ENCODE measurements at regions of chr7 and their contacts with region 1.

Region 1: DNA sequence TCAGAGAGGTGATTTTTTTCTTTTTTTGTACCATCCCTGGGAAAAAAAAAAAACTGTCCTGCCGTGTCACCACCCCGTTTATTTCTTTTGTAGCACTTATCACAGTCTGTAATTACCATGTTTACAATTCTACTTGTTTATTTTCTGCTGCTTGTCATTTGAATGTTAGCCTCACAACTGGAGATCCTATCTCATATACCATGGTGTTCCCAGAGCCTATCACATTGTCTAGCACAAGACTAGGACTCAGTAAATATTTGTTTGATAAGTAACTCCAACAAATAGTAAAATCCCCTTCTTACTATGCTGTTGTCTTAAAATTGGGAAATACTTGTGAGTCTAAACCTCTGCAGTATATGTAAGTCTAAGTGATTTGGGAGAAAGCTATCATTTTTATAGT is 36.0 kb downstream of the MKLN1 start:
- DNase-seq: no peak
- ATAC-seq: no peak
- H3K4me3 ChIP-seq: no peak overlapping the region
- H3K4me3 Mint-ChIP-seq: no peak overlapping the region
- H3K27ac ChIP-seq: no peak overlapping the region
- H3K27ac Mint-ChIP-seq: no peak overlapping the region
- H3K4me1 ChIP-seq: peaks cover 0 to 29% of the 10 kb centered on the region in 2 donors
- H3K4me1 Mint-ChIP-seq: peaks cover 70% of the 10 kb centered on the region
- H3K27me3 ChIP-seq: no peaks in the 10 kb centered on the region
- H3K27me3 Mint-ChIP-seq: no peaks in the 10 kb centered on the region
- CTCF ChIP-seq: no peak

Region 2: DNA sequence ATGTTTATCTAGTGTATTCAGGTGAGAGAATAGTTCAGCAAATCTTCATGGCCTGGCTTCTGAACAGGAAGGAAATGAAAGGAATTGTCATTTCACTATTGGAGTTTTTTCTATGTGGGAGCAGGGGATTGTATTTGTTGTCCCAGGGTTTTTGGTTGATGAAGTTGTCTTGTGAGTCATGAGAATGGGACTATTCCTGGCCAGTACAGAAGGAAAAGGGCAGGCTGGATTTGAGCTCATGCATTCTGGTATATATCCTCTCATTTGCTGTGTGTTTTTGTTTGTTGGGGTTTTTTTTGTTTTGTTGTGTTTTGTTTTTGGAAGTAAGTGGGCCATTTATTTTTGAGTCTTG is 137.2 kb before region 1 on chr7:
- CTCF ChIA-PET with region 1: no interaction called
- POLR2A ChIA-PET with region 1: no interaction called
- intact Hi-C with region 1: no loop called
- DNase-seq: no peak
- ATAC-seq: no peak
- H3K4me3 ChIP-seq: no peak overlapping the region
- H3K4me3 Mint-ChIP-seq: no peak overlapping the region
- H3K27ac ChIP-seq: no peak overlapping the region
- H3K27ac Mint-ChIP-seq: peak overlapping the region; percentile 37
- H3K4me1 ChIP-seq: peaks cover 6 to 10% of the 10 kb centered on the region in 2 donors
- H3K4me1 Mint-ChIP-seq: peaks cover 21% of the 10 kb centered on the region
- H3K27me3 ChIP-seq: no peaks in the 10 kb centered on the region
- H3K27me3 Mint-ChIP-seq: no peaks in the 10 kb centered on the region
- CTCF ChIP-seq: no peak

Region 3: GRCh38 chr7:131346885-131347592 is 16.7 kb before region 1 on chr7:
- CTCF ChIA-PET with region 1: no interaction called
- POLR2A ChIA-PET with region 1: no interaction called
- intact Hi-C with region 1: loop called (anchors 2 kb)
- DNase-seq: no peak
- ATAC-seq: no peak
- H3K4me3 ChIP-seq: no peak overlapping the region
- H3K4me3 Mint-ChIP-seq: no peak overlapping the region
- H3K27ac ChIP-seq: no peak overlapping the region
- H3K27ac Mint-ChIP-seq: no peak overlapping the region
- H3K4me1 ChIP-seq: peaks cover 0 to 8% of the 10 kb centered on the region in 2 donors
- H3K4me1 Mint-ChIP-seq: peaks cover 44% of the 10 kb centered on the region
- H3K27me3 ChIP-seq: no peaks in the 10 kb centered on the region
- H3K27me3 Mint-ChIP-seq: no peaks in the 10 kb centered on the region
- CTCF ChIP-seq: no peak

Measured in B cell (primary cell).